Activated CD4-positive, alpha-beta T cell treated with anti-CD3 and anti-CD28 coated beads, Interleukin-2, amount 10 ng/mL, durations not matched to agents 7 days and 5 days (primary cell): ENCODE measurements at regions of chr9 and their contacts with region 1.

Region 1: DNA sequence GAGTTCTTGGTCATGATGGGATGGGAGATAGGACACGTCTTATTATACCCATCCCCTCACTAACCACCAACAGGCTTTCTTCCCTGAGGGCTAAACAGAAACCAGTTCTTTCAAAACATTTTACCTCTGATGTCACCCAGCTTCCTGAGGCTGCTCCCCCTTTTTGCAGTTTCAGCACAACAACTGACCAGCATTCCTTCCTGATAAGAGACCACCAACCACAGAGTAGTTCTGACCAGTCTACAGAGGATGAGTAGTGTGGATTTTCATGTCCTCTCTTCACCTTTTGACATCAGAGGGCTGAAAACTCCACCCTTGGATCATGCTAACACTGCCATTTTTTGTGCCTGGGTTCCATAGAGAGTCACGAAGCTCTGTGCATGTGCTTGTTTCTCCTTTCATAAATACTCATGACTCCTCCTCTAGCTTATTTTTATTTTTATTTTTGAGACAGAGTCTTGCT is 82.6 kb downstream of the OSTF1 start:
- DNase-seq: no peak
- H3K4me3 Mint-ChIP-seq: no peak overlapping the region
- H3K27ac Mint-ChIP-seq: peak overlapping the region; percentile 52
- H3K4me1 Mint-ChIP-seq: peaks cover 51% of the 10 kb centered on the region
- H3K27me3 Mint-ChIP-seq: no peaks in the 10 kb centered on the region

Region 2: DNA sequence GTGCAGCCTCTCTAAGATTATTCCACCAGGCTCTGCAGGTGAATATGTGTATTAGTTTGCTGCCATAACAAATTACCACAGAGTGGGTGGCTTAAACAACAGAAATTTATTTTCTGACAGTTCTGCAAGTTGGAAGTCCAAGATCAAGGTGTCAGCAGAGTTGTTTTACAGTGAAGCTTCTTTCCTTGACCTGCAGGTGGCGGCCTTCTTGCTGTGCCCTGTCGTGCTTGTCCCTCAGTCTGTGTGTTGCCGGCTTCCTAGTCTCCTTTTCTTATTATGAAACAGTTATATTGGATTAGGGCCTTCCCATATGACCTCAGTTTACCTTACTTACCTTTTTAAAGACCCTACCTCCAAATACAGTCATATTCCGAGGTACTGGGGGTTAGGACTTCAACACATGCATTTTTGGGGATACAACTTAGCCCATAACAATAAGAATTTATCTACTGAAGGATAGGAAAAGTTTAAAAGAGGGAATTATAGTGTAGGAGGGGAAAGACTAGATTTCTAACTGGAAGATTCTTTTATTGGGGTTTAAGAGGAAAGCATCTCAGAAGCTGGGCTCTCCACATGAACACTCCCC is 14.7 kb after region 1 on chr9:
- CTCF ChIA-PET with region 1: interaction called, 14 read pairs
- POLR2A ChIA-PET with region 1: no interaction called
- DNase-seq: peak; percentile 56
- H3K4me3 Mint-ChIP-seq: no peak overlapping the region
- H3K27ac Mint-ChIP-seq: no peak overlapping the region
- H3K4me1 Mint-ChIP-seq: peaks cover 27% of the 10 kb centered on the region
- H3K27me3 Mint-ChIP-seq: no peaks in the 10 kb centered on the region